IMR-90 (cell line): ENCODE measurements at regions of chr20 and their contacts with region 1.

Region 1: DNA sequence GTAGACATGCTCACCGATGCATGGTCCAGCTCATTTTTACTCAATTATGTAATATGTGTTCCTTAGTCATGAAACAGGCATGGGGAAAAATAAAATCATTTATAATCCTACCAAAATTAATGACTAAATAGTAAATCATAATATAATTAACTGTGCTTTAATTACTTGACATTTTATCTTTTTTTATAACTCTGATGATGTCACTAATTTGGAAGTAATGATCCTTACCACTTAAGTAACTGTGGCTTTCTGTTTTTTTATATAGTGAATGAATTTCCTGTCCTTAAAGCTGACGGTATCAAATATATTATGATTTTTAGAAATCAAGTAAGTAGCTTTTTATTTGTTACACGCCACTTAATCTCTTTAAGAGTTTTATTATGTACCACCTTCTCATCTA is 32.2 kb downstream of the CSE1L start:
- DNase-seq: no peak
- ATAC-seq: no peak
- H3K4me3 ChIP-seq: no peak overlapping the region
- H3K27ac ChIP-seq: no peak overlapping the region
- H3K4me1 ChIP-seq: no peaks in the 10 kb centered on the region
- H3K27me3 ChIP-seq: no peaks in the 10 kb centered on the region
- CTCF ChIP-seq: no peak
- POLR2A ChIP-seq: no peak
- RAD21 ChIP-seq: no peak

Region 2: GRCh38 chr20:48945851-48946514 is 132.3 kb before region 1 on chr20:
- CTCF ChIA-PET with region 1: no interaction called
- POLR2A ChIA-PET with region 1: no interaction called
- dilution Hi-C with region 1: no loop called
- in situ Hi-C with region 1: no loop called
- intact Hi-C with region 1: no loop called
- DNase-seq: peak; percentile 45
- ATAC-seq: peak; percentile 89
- H3K4me3 ChIP-seq: no peak overlapping the region
- H3K27ac ChIP-seq: no peak overlapping the region
- H3K4me1 ChIP-seq: peaks cover 6% of the 10 kb centered on the region; the same call in 1 of the 2 replicates
- H3K27me3 ChIP-seq: no peaks in the 10 kb centered on the region
- CTCF ChIP-seq: no peak
- POLR2A ChIP-seq: no peak
- RAD21 ChIP-seq: no peak

Region 3: DNA sequence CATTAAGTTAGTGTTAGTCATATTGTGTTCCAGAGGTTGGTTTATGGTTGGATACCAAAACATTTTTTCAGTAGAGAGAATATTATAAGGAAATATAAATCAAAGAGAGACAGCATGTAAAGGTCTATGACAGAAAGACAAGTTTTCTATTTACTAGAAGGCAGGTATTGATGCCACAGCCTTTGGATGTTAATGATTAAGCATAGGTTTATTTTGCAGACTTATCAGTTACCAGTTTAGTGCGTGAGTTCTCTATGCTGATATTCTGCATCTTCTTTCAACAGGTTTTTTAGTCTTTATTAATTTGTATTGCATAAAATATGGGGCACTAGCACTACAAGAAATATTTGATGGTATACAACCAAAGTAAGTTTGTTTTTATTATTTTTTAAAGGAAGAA is 13.5 kb after region 1 on chr20:
- CTCF ChIA-PET with region 1: interaction called, 4 read pairs
- POLR2A ChIA-PET with region 1: no interaction called
- dilution Hi-C with region 1: no loop called
- in situ Hi-C with region 1: no loop called
- intact Hi-C with region 1: loop called (anchors 2 kb)
- DNase-seq: no peak
- ATAC-seq: no peak
- H3K4me3 ChIP-seq: no peak overlapping the region
- H3K27ac ChIP-seq: no peak overlapping the region
- H3K4me1 ChIP-seq: no peaks in the 10 kb centered on the region
- H3K27me3 ChIP-seq: no peaks in the 10 kb centered on the region
- CTCF ChIP-seq: no peak
- POLR2A ChIP-seq: no peak
- RAD21 ChIP-seq: no peak